Right ventricle myocardium superior (tissue), 1 donor: ENCODE measurements at regions of chr19 and their contacts with region 1.

Region 1: GRCh38 chr19:4007021-4007835 is at the start of gene PIAS4:
- DNase-seq: peak; percentile 97
- ATAC-seq: peak; percentile 94
- total RNA-seq, gene PIAS4: 16.7 TPM

Region 2: DNA sequence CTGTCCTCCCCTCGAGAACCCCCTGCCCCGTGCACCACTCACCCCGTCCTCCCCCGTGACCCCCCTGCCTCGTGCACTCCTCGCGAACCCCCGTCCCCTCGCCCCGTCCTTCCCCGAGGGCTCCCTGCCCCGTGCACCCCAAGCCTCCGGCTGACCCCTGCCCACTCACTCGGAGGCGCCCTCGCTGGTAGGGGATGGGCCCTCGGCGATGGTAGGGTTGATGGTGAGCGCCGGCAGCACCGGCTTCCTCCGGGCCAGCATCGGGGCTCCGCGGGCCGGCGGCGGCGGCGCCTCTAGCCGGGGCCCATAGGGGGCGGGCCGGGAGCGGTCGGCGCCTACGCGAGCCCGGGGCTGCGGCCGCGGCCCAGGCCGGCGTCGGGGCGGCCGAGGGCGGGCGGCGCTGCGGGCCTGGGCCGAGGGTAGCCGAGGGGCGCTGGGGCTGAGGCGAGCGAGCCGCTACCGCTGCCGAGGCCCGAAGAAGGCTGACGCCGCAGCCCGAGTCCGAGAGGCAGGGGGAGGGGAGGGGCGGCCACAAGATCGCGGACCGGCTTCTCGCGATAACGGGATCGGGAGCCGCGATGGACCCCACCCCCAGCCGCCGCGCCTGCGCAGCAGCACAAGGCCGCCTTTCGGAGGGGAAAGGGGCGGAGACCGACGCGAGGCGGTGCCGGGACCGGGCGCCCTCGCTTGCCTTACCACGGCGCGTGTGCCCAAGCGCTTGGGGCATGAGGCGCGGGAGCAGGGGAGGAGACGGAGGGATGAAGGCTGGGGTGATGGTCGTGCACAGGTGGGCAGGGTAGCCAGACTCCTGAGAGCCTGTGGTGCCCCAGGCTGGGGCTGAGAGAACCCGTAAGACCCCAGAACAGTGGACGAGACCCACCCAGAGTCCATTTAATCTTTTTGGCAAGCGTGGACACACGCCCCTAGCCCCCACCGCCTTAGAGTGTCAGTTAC is 116.7 kb after region 1 on chr19 and contains the start of gene MAP2K2:
- intact Hi-C with region 1: loop called (anchors 10 kb)
- DNase-seq: peak; percentile 96
- ATAC-seq: peak; percentile 99
- total RNA-seq, gene MAP2K2: 136 TPM

Region 3: DNA sequence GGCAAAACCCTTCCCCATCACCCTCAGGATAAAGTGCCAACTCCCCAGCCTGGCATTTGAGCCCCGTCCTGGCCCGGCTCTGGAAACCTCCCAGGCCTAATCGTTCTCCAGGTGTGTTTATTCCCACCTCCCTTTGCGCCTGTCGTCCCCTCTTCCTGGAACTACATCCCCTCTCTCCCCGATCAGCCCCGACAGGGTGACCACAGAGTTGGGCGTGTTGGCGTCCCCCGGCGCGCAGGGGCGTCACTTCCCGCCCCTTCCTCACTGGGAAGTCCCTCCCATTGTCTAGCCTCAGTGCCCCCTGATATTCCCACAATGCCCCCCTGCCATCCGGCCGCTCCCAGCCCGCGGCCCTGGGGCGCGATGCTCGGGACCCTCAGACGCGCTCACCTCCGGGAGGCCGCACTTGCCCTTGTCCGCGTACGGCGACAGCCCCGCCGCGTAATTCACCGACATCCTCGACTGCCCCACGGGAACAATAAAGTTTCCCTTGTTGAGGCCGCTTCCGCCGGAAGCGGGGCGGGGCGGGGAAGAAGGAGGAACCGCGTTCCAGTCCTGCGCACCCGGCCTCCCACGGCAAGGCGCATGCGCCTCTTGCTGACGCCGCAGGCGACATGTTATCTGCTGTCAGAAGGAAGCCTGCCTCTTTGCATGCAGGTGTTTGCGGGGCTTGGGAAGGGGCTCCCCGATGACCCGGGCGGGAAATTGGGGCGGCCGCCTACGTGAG is 175.0 kb after region 1 on chr19 and contains the starts of genes ANKRD24 and SIRT6:
- intact Hi-C with region 1: loop called (anchors 10 kb)
- DNase-seq: peak; percentile 97
- ATAC-seq: peak; percentile 98
- total RNA-seq, gene ANKRD24: 0.08 TPM
- total RNA-seq, gene SIRT6: 9.4 TPM